ENCODE measurements at regions of chr11 and their contacts with region 1.

Region 1: GRCh38 chr11:63567044-63567840 is 4.1 kb upstream of the PLAAT2 start:
- DNase-seq: peak; percentile 77
- H3K4me3 Mint-ChIP-seq: peak overlapping the region; percentile 50
- H3K27ac Mint-ChIP-seq: peak overlapping the region; percentile 93
- H3K4me1 Mint-ChIP-seq: peaks cover 36% of the 10 kb centered on the region
- H3K27me3 Mint-ChIP-seq: peaks cover 6% of the 10 kb centered on the region

Region 2: GRCh38 chr11:63445720-63446119 is 121.5 kb before region 1 on chr11:
- intact Hi-C with region 1: no loop called
- DNase-seq: no peak
- H3K4me3 Mint-ChIP-seq: no peak overlapping the region
- H3K27ac Mint-ChIP-seq: no peak overlapping the region
- H3K4me1 Mint-ChIP-seq: peaks cover 21% of the 10 kb centered on the region
- H3K27me3 Mint-ChIP-seq: peaks cover 10% of the 10 kb centered on the region

Region 3: GRCh38 chr11:63490551-63491239 is 76.5 kb before region 1 on chr11 and contains the start of gene PLAAT5:
- intact Hi-C with region 1: loop called (anchors 5 kb)
- DNase-seq: no peak
- H3K4me3 Mint-ChIP-seq: peak within 1 kb of the TSS; percentile 67
- H3K27ac Mint-ChIP-seq: no peak within 1 kb of the TSS
- H3K4me1 Mint-ChIP-seq: peaks cover 15% of the 10 kb centered on the region
- H3K27me3 Mint-ChIP-seq: peaks cover 62% of the 10 kb centered on the region
- total RNA-seq, gene PLAAT5: not detected in 2 replicates

Region 4: GRCh38 chr11:63553741-63554151 is 13.5 kb before region 1 on chr11:
- intact Hi-C with region 1: loop called (anchors 1 kb)
- DNase-seq: peak; percentile 53
- H3K4me3 Mint-ChIP-seq: peak overlapping the region; percentile 62
- H3K27ac Mint-ChIP-seq: peak overlapping the region; percentile 88
- H3K4me1 Mint-ChIP-seq: peaks cover 35% of the 10 kb centered on the region
- H3K27me3 Mint-ChIP-seq: peaks cover 1% of the 10 kb centered on the region

Region 5: DNA sequence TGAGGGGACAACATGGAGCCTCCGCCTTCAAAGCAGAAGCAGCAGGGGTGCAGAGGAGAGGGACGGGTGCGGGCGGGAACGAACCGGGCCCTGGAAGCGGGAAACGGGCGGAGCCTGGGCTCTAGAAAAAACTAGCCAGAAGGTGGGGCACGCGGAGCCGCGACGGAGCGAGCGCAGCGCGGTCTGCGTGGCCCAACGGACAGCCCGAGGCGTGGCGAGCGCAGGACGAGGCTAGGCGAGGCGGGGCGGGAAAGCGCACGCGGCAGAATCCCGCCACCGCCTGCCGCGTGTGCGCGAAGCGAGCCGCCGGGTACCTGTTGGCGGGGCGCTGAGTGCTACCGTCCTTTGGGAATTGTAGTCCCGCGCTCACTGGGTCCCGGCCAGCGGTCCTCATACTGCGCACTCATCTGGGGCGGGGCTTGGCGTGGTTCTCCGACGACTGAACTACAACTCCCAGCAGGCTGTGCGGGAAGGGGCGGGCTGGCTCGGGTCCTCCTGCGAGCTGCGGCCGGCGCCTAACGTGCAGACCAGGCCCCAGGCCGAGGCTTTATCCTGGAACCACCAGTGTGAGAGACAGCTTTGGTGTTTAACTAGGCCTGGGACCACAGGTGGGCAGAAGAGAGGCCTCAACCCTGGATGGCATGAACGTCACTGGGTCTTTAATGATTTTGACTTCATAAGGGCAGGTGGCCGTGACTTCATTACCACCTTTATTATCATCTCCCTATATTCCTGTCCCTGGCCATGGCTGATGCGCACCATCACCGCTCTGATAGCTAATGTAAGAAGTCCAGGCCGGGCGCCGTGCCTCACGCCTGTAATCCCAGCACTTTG is 104.3 kb after region 1 on chr11 and contains the start of gene ATL3:
- intact Hi-C with region 1: loop called (anchors 1 kb)
- DNase-seq: peak; percentile 91
- H3K4me3 Mint-ChIP-seq: peak within 1 kb of the TSS; percentile 92
- H3K27ac Mint-ChIP-seq: peak within 1 kb of the TSS; percentile 81
- H3K4me1 Mint-ChIP-seq: peaks cover 25% of the 10 kb centered on the region
- H3K27me3 Mint-ChIP-seq: no peaks in the 10 kb centered on the region
- total RNA-seq, gene ATL3: 35.6 and 37.0 TPM in 2 replicates

Region 6: GRCh38 chr11:63768237-63769043 is 201.2 kb after region 1 on chr11 and contains the start of gene ZFTA:
- intact Hi-C with region 1: loop called (anchors 1 kb)
- DNase-seq: peak; percentile 45
- H3K4me3 Mint-ChIP-seq: peak within 1 kb of the TSS; percentile 87
- H3K27ac Mint-ChIP-seq: peak within 1 kb of the TSS; percentile 35
- H3K4me1 Mint-ChIP-seq: peaks cover 14% of the 10 kb centered on the region
- H3K27me3 Mint-ChIP-seq: peaks cover 33% of the 10 kb centered on the region
- total RNA-seq, gene ZFTA: 3.8 and 5.3 TPM in 2 replicates

Measured in activated T-helper 1 cell treated with anti-CD3 and anti-CD28 coated beads, Interleukin-12 subunit alpha, Interleukin-12 subunit beta, Interleukin-2, Interleukin-4 antibody, amounts not matched to agents 30 ng/mL and 10 ng/mL and 1 ng/mL, durations not matched to agents 14 hours and 24 hours and 36 hours (primary cell).